ENCODE measurements at regions of chr4 and their contacts with region 1.

Region 1: DNA sequence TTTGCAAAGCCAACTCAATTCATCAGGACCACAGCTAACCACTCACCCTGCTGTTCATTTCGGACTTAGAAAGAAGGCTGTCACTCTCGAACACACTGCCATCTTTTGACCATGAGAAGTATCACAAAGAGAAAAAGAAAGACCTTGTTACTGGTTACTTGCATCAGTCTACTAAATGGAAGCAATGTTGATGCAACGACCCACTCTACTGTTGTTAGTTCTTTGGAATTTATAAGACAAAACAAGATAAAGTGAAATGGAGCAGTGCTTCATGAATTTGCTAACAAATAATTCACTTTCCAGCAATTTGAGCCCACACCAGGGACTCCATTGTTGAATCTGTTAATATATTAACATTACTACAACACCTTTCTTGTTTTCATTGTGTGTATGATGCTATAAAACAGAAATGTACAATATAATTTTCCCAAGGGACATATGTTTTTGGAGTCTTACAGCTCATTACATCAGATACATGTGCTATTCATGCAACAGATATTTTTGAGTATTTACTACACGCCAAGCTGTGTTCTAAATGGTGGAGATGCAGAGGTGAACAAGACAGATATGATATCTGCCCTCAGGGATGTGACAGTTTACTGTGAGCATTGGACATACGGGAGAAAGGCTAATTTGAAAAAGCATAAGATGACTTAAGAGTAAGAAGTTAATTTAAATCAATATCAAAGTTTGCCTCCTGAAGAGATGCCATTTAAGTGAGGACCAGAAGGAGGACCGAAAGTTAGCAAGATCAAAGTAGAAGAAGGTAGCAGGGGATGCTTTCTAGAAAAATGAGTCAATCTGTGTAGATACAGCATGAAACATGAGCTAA is 87.2 kb downstream of the AREG start:
- DNase-seq: peak; percentile 11
- ATAC-seq: peak; percentile 47
- H3K4me3 Mint-ChIP-seq: no peak overlapping the region
- H3K27ac Mint-ChIP-seq: no peak overlapping the region
- H3K4me1 Mint-ChIP-seq: no peaks in the 10 kb centered on the region
- H3K27me3 Mint-ChIP-seq: no peaks in the 10 kb centered on the region
- CTCF ChIP-seq: peak; percentile 50

Region 2: GRCh38 chr4:74376888-74377483 is 155.2 kb before region 1 on chr4:
- CTCF ChIA-PET with region 1: interaction called, 36 read pairs
- POLR2A ChIA-PET with region 1: no interaction called
- intact Hi-C with region 1: loop called (anchors 5 kb)
- DNase-seq: no peak
- ATAC-seq: no peak
- H3K4me3 Mint-ChIP-seq: no peak overlapping the region
- H3K27ac Mint-ChIP-seq: no peak overlapping the region
- H3K4me1 Mint-ChIP-seq: peaks cover 2% of the 10 kb centered on the region
- H3K27me3 Mint-ChIP-seq: peaks cover 2% of the 10 kb centered on the region
- CTCF ChIP-seq: peak; percentile 67

Region 3: DNA sequence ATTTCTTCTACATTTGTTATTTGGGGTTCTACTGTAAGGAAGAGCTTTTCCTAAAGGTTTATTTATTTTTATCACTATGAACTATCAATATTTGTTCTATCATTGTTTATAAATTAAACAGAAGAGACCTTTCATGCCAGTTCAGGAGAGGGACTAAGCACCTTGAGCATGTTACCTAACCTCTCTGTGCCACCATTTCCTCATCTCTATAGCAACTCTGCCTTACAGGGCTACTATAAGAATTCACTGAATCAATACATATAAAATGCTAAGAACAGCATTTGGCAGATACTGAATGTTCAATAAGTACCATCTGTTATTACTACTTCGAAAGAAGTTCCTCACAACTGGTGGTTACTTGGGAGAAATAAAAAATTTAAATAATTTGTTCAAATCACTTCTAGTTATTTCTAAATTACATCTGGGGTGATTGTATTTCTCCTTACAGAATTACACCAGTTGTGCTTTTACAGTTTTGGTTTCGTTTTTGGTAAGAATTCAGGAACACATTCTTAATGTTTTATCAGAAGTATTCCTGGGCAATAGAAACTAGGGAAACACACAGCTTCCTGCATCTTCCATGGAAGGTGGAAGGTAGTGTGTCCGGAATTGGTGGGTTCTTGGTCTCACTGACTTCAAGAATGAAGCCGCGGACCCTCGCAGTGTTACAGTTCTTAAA is 134.3 kb before region 1 on chr4:
- CTCF ChIA-PET with region 1: no interaction called
- POLR2A ChIA-PET with region 1: no interaction called
- intact Hi-C with region 1: no loop called
- DNase-seq: no peak
- ATAC-seq: peak; percentile 74
- H3K4me3 Mint-ChIP-seq: peak overlapping the region; percentile 84
- H3K27ac Mint-ChIP-seq: peak overlapping the region; percentile 93
- H3K4me1 Mint-ChIP-seq: peaks cover 9% of the 10 kb centered on the region
- H3K27me3 Mint-ChIP-seq: no peaks in the 10 kb centered on the region
- CTCF ChIP-seq: no peak